Natural killer cell (primary cell): ENCODE measurements at regions of chr14 and their contacts with region 1.

Region 1: GRCh38 chr14:35883677-35884293 is 57.6 kb downstream of the BRMS1L start:
- DNase-seq: peak in 1 of 2 donors; percentile 44
- ATAC-seq: no peak
- H3K4me3 ChIP-seq: no peak overlapping the region
- H3K4me3 Mint-ChIP-seq: no peak overlapping the region
- H3K27ac ChIP-seq: no peak overlapping the region
- H3K27ac Mint-ChIP-seq: no peak overlapping the region
- H3K4me1 ChIP-seq: no peaks in the 10 kb centered on the region
- H3K4me1 Mint-ChIP-seq: peaks cover 5 to 6% of the 10 kb centered on the region in 2 donors
- H3K27me3 ChIP-seq: no peaks in the 10 kb centered on the region
- H3K27me3 Mint-ChIP-seq: peaks cover 6 to 20% of the 10 kb centered on the region in 2 donors
- CTCF ChIP-seq: no peak

Region 2: DNA sequence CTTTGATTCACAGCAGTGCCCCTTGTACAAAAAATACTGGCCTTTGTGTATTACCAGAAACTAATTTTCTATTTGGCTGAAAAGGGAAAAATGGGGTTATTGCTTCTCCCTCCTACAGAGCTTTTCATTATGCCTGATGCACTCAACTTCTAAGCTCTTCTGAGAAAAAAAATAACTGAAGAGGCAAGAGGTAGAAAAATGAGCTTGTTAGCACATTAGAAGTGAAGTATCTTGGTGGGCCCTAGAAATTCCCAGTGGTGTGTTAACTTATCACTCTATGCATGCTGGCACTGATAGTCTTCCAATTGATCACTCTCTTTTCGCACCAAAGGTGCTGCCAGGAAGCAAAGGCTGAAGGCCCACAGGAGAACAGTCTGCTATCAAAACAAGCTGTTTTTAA is 332.7 kb before region 1 on chr14:
- intact Hi-C with region 1: no loop called
- DNase-seq: no peak
- ATAC-seq: no peak
- H3K4me3 ChIP-seq: no peak overlapping the region
- H3K4me3 Mint-ChIP-seq: no peak overlapping the region
- H3K27ac ChIP-seq: no peak overlapping the region
- H3K27ac Mint-ChIP-seq: no peak overlapping the region
- H3K4me1 ChIP-seq: no peaks in the 10 kb centered on the region
- H3K4me1 Mint-ChIP-seq: no peaks in the 10 kb centered on the region
- H3K27me3 ChIP-seq: no peaks in the 10 kb centered on the region
- H3K27me3 Mint-ChIP-seq: no peaks in the 10 kb centered on the region
- CTCF ChIP-seq: no peak

Region 3: DNA sequence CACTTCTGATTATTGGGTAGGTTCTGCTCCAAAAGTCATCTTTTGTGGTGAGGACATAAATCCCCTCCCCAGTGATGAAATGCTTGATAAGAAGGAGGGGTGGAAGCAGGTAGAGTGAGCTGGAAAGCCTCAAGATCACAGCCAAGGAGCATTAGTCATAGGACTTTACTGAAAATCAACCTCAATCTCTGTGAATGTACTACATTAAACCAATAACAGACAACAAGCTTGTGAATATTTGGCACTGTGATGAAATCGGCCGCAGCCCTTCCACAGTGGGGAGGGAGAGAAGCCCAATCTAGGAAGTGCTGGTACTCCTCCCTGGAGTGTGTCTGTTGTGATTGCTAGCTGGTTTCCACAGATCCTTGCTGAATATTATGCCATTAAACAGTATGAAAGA is 333.9 kb after region 1 on chr14:
- intact Hi-C with region 1: no loop called
- DNase-seq: no peak
- ATAC-seq: no peak
- H3K4me3 ChIP-seq: no peak overlapping the region
- H3K4me3 Mint-ChIP-seq: no peak overlapping the region
- H3K27ac ChIP-seq: no peak overlapping the region
- H3K27ac Mint-ChIP-seq: no peak overlapping the region
- H3K4me1 ChIP-seq: no peaks in the 10 kb centered on the region
- H3K4me1 Mint-ChIP-seq: no peaks in the 10 kb centered on the region
- H3K27me3 ChIP-seq: no peaks in the 10 kb centered on the region
- H3K27me3 Mint-ChIP-seq: peaks cover 0 to 2% of the 10 kb centered on the region in 2 donors
- CTCF ChIP-seq: no peak

Region 4: DNA sequence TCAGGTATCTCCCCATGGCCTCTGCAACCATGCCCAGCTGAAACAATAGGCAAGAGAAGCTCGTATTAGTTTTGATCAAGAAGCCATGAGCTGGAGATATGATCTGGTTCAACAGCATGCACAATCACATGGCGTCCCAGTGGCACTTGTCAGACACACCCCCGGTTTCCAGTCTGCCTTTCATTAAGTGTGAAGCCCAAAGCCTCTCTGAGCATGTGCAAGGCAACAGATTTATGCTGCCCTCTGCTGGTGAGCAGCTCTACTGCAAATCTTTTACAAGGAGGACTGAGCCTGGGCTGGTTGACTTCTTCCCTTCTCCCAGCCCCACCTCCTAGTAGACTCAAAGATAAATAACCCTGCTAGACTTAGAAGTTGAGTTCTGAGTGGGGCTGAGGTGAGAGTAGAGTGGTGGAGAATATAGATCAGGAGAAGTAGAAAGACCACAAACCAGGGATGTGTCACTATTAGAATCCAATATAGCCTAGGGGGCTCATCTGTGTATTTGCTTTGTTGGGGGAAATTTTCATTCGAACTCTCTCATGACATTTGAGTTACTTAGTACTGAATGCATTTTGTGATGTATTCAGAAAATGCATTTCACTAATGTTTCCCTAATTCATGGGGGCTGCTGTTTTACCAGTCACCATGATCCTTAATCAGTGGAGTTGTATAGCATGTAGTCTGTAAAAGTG is 490.3 kb after region 1 on chr14:
- intact Hi-C with region 1: loop called (anchors 10 kb)
- DNase-seq: peak in 1 of 2 donors; percentile 78
- ATAC-seq: peak in 2 of 3 donors; percentile 63 to 65
- H3K4me3 ChIP-seq: no peak overlapping the region
- H3K4me3 Mint-ChIP-seq: no peak overlapping the region
- H3K27ac ChIP-seq: no peak overlapping the region
- H3K27ac Mint-ChIP-seq: no peak overlapping the region
- H3K4me1 ChIP-seq: no peaks in the 10 kb centered on the region
- H3K4me1 Mint-ChIP-seq: peaks cover 0 to 4% of the 10 kb centered on the region in 2 donors
- H3K27me3 ChIP-seq: no peaks in the 10 kb centered on the region
- H3K27me3 Mint-ChIP-seq: no peaks in the 10 kb centered on the region
- CTCF ChIP-seq: peak; percentile 35